CD4-positive, alpha-beta T cell (primary cell): ENCODE measurements at regions of chr6 and their contacts with region 1.

Region 1: DNA sequence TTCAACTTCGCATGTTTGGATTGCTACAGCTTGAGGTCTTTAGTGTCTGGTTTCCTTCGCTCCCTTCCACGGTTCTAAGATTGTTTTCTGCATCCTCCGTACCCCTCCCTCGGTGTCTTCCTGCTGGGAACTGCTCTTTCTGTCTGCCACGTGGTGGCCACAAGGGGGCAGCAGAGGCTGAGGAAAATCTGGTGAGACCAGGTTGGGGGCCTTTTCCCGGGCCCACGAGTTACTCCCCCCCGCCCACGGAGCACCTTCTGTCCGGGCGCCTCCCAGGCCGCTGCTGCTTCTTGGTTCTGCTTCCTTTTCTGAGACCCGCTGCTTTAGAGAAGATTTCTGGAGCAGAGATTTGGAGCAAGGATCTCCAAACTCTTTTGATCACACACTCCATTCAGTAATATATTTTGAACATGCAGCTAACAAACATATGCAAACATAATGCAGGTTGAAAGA is 21.1 kb upstream of the NOTCH4 start:
- DNase-seq: peak; percentile 50 to 85 (median 66)
- ATAC-seq: peak; percentile 84
- H3K4me3 ChIP-seq: no peak overlapping the region
- H3K4me3 Mint-ChIP-seq: no peak overlapping the region
- H3K27ac ChIP-seq: no peak overlapping the region
- H3K27ac Mint-ChIP-seq: no peak overlapping the region
- H3K4me1 ChIP-seq: peaks cover 7% of the 10 kb centered on the region
- H3K4me1 Mint-ChIP-seq: peaks cover 6% of the 10 kb centered on the region
- H3K27me3 ChIP-seq: no peaks in the 10 kb centered on the region
- H3K27me3 Mint-ChIP-seq: no peaks in the 10 kb centered on the region
- CTCF ChIP-seq: peak; percentile 97

Region 2: GRCh38 chr6:32118782-32119628 is 126.0 kb before region 1 on chr6:
- CTCF ChIA-PET with region 1: no interaction called
- POLR2A ChIA-PET with region 1: no interaction called
- intact Hi-C with region 1: loop called in 1 of 2 experiments (anchors 5 kb)
- DNase-seq: peak; percentile 44 to 83 (median 64)
- ATAC-seq: peak; percentile 82
- H3K4me3 ChIP-seq: no peak overlapping the region
- H3K4me3 Mint-ChIP-seq: no peak overlapping the region
- H3K27ac ChIP-seq: no peak overlapping the region
- H3K27ac Mint-ChIP-seq: no peak overlapping the region
- H3K4me1 ChIP-seq: peaks cover 10% of the 10 kb centered on the region
- H3K4me1 Mint-ChIP-seq: peaks cover 13% of the 10 kb centered on the region
- H3K27me3 ChIP-seq: no peaks in the 10 kb centered on the region
- H3K27me3 Mint-ChIP-seq: no peaks in the 10 kb centered on the region
- CTCF ChIP-seq: peak; percentile 81

Region 3: DNA sequence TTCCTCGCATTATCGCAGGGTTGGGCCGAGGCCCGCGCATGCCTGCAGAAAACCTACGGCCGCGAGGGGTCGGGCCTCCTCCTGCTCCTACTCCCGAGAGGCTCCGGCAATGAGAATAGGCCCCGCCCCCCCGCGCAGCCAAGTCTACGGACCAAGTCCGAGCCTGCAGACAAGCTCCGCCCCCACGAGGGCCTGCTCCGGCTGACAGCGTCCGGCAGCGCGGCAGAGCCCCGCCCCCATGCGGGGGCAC is 49.4 kb before region 1 on chr6:
- CTCF ChIA-PET with region 1: interaction called, 3 read pairs
- POLR2A ChIA-PET with region 1: interaction called, 3 read pairs
- intact Hi-C with region 1: loop called (anchors 2 to 5 kb)
- DNase-seq: peak in 13 of 14 experiments; percentile 97 to 100 (median 100)
- ATAC-seq: peak; percentile 82
- H3K4me3 ChIP-seq: peak overlapping the region; percentile 100
- H3K4me3 Mint-ChIP-seq: peak overlapping the region; percentile 99
- H3K27ac ChIP-seq: peak overlapping the region; percentile 87 to 100
- H3K27ac Mint-ChIP-seq: peak overlapping the region; percentile 96
- H3K4me1 ChIP-seq: peaks cover 52% of the 10 kb centered on the region
- H3K4me1 Mint-ChIP-seq: peaks cover 48% of the 10 kb centered on the region
- H3K27me3 ChIP-seq: no peaks in the 10 kb centered on the region
- H3K27me3 Mint-ChIP-seq: no peaks in the 10 kb centered on the region
- CTCF ChIP-seq: peak; percentile 31

Region 4: GRCh38 chr6:32203426-32204247 is 41.3 kb before region 1 on chr6:
- CTCF ChIA-PET with region 1: no interaction called
- POLR2A ChIA-PET with region 1: no interaction called
- intact Hi-C with region 1: loop called in 1 of 2 experiments (anchors 5 kb)
- DNase-seq: peak in 1 of 14 experiments; percentile 8
- ATAC-seq: no peak
- H3K4me3 ChIP-seq: no peak overlapping the region
- H3K4me3 Mint-ChIP-seq: no peak overlapping the region
- H3K27ac ChIP-seq: no peak overlapping the region
- H3K27ac Mint-ChIP-seq: no peak overlapping the region
- H3K4me1 ChIP-seq: no peaks in the 10 kb centered on the region
- H3K4me1 Mint-ChIP-seq: no peaks in the 10 kb centered on the region
- H3K27me3 ChIP-seq: peaks cover 0 to 2% of the 10 kb centered on the region in 2 experiments
- H3K27me3 Mint-ChIP-seq: peaks cover 3% of the 10 kb centered on the region
- CTCF ChIP-seq: no peak

Region 5: DNA sequence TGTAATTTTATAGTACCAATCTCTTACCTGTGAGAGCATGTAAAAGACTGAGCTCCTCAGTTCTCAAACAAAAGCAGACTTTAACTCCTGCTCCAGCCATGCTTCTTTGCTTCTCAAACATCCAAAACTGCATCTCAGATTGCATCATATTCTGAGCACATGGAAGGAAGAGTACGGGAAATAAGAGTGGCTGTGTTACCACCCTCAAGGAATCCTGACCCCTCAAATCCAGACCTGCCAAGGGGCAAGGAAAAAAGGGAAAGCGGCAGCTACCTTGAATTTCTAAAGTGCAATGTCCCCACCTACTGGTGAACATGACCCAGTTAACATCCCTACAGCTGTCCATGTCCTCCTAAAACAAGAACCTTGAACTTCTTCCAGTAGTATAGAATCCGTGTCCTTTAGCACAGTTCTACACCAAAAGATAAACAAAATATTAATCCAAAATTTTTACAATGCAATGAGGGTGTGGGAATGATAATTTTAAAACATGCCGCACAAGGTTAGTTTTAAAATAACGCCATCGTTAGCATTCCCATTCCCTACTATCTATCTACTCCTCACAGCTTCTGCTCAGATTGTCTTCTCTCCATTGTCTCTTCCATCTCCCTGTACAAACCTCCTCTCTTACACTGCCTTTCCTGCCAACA is 455.5 kb after region 1 on chr6:
- CTCF ChIA-PET with region 1: no interaction called
- POLR2A ChIA-PET with region 1: no interaction called
- intact Hi-C with region 1: loop called in 1 of 2 experiments (anchors 5 kb)
- DNase-seq: peak in 10 of 14 experiments; percentile 0 to 73 (median 10)
- ATAC-seq: peak; percentile 41
- H3K4me3 ChIP-seq: no peak overlapping the region
- H3K4me3 Mint-ChIP-seq: no peak overlapping the region
- H3K27ac ChIP-seq: no peak overlapping the region
- H3K27ac Mint-ChIP-seq: no peak overlapping the region
- H3K4me1 ChIP-seq: peaks cover 3% of the 10 kb centered on the region
- H3K4me1 Mint-ChIP-seq: no peaks in the 10 kb centered on the region
- H3K27me3 ChIP-seq: peaks cover 4 to 12% of the 10 kb centered on the region in 2 experiments
- H3K27me3 Mint-ChIP-seq: peaks cover 50% of the 10 kb centered on the region
- CTCF ChIP-seq: peak; percentile 93

Region 6: GRCh38 chr6:32796848-32797776 is 552.1 kb after region 1 on chr6:
- CTCF ChIA-PET with region 1: no interaction called
- POLR2A ChIA-PET with region 1: no interaction called
- intact Hi-C with region 1: loop called (anchors 5 to 10 kb)
- DNase-seq: peak; percentile 57 to 88 (median 76)
- ATAC-seq: peak; percentile 73
- H3K4me3 ChIP-seq: peak overlapping the region; percentile 14
- H3K4me3 Mint-ChIP-seq: peak overlapping the region; percentile 40
- H3K27ac ChIP-seq: no peak overlapping the region
- H3K27ac Mint-ChIP-seq: no peak overlapping the region
- H3K4me1 ChIP-seq: peaks cover 9% of the 10 kb centered on the region
- H3K4me1 Mint-ChIP-seq: peaks cover 26% of the 10 kb centered on the region
- H3K27me3 ChIP-seq: peaks cover 14 to 21% of the 10 kb centered on the region in 2 experiments
- H3K27me3 Mint-ChIP-seq: peaks cover 65% of the 10 kb centered on the region
- CTCF ChIP-seq: peak; percentile 97

Region 7: DNA sequence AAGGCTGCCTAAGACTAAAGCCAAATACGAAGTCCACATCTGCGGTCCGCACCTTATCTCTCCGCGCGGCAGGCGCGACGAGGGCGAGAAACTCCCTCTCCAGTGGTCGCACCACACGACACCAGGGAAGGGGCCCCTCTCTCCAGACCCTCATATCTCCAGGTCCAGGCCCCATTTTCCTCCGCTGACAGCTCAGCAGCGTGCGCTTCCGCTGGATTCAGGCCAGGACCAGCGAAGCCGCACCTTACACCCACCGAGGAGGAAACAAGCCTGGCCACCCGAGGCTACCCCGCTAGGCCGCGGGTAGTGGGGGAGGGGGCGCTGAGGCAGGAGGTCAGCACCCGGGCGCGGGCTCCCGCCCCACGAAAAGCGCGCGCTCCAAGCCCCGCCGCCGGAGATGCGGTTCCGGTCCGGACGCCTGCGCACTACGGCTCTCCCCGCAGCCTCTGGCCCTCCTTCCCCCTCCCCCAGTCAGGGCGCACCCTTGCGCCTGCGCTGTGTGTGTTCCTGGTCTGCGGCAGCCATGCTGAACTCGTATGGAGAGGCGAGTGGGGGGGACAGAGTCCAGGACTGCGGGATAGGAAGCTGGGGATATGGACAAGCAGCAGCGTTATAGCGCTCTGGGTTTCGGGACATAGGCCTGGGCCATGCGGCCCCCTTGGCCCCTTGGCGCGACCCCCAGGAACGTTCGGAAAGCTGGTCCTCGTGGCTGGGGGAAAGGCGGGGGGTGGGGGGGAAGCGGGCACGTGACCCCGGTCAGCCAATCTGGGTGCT is 723.3 kb after region 1 on chr6 and contains the start of gene BRD2:
- CTCF ChIA-PET with region 1: no interaction called
- POLR2A ChIA-PET with region 1: no interaction called
- intact Hi-C with region 1: no loop called
- DNase-seq: peak; percentile 91 to 99 (median 96)
- ATAC-seq: peak; percentile 44
- H3K4me3 ChIP-seq: peak within 1 kb of the TSS; percentile 97
- H3K4me3 Mint-ChIP-seq: peak within 1 kb of the TSS; percentile 90
- H3K27ac ChIP-seq: peak within 1 kb of the TSS; percentile 91 to 98
- H3K27ac Mint-ChIP-seq: peak within 1 kb of the TSS; percentile 100
- H3K4me1 ChIP-seq: peaks cover 40% of the 10 kb centered on the region
- H3K4me1 Mint-ChIP-seq: peaks cover 46% of the 10 kb centered on the region
- H3K27me3 ChIP-seq: no peaks in the 10 kb centered on the region
- H3K27me3 Mint-ChIP-seq: no peaks in the 10 kb centered on the region
- CTCF ChIP-seq: no peak
- total RNA-seq, gene BRD2: 340 to 378 TPM